ENCODE measurements at regions of chr4 and their contacts with region 1.

Region 1: GRCh38 chr4:173652283-173652931 is 122.4 kb upstream of the HAND2 start:
- DNase-seq: peak; percentile 69
- H3K4me3 ChIP-seq: no peak overlapping the region
- H3K27ac ChIP-seq: peak overlapping the region; percentile 38 to 75 (median 59)
- H3K4me1 ChIP-seq: peaks cover 0 to 21% (median 7%) of the 10 kb centered on the region in 4 donors
- H3K27me3 ChIP-seq: no peaks in the 10 kb centered on the region
- CTCF ChIP-seq: no peak
- EP300 ChIP-seq: peak; percentile 38 to 81 (median 66)
- POLR2A ChIP-seq: no peak

Region 2: DNA sequence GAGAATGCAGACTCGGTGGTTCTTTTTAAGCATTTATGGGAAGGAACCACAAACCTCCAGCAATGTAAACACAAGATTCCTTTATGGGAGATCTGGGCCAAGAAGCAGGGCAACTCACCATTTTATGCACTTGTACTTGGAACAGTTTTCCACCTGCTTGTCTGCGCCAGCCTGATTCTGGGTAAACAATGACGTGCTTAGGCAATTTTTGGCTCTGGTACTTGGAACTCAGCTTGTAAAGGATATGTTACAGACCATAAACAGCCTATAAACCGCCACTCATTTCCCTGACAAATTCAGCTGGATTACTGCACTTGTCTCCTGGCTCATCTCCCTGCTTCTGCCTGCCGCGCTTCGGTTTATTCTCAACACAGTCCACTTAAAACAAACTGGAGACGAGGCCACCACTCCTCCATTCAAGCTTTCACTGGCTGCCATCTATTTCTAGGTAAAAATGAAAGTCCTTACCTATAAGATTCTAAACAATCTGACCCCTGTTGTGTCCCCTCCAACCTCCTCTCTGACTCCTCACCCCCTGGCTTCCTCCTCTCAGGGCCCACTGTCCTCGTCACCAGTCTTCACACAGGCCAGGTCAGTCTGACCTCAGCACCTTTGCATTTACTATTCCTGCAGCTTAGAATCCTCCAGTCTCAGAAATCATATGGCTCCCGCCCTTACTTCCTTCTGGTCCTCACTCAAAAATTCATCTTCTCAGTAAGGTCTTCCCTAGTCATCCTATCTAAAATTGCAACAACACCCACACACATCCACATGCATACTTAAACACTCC is 689.6 kb before region 1 on chr4:
- intact Hi-C with region 1: loop called (anchors 10 kb)
- DNase-seq: peak; percentile 90
- H3K4me3 ChIP-seq: no peak overlapping the region
- H3K27ac ChIP-seq: peak overlapping the region; percentile 60 to 83 (median 73)
- H3K4me1 ChIP-seq: peaks cover 0 to 31% (median 25%) of the 10 kb centered on the region in 4 donors
- H3K27me3 ChIP-seq: no peaks in the 10 kb centered on the region
- CTCF ChIP-seq: no peak
- EP300 ChIP-seq: peak; percentile 87 to 98 (median 96)
- POLR2A ChIP-seq: no peak

Region 3: DNA sequence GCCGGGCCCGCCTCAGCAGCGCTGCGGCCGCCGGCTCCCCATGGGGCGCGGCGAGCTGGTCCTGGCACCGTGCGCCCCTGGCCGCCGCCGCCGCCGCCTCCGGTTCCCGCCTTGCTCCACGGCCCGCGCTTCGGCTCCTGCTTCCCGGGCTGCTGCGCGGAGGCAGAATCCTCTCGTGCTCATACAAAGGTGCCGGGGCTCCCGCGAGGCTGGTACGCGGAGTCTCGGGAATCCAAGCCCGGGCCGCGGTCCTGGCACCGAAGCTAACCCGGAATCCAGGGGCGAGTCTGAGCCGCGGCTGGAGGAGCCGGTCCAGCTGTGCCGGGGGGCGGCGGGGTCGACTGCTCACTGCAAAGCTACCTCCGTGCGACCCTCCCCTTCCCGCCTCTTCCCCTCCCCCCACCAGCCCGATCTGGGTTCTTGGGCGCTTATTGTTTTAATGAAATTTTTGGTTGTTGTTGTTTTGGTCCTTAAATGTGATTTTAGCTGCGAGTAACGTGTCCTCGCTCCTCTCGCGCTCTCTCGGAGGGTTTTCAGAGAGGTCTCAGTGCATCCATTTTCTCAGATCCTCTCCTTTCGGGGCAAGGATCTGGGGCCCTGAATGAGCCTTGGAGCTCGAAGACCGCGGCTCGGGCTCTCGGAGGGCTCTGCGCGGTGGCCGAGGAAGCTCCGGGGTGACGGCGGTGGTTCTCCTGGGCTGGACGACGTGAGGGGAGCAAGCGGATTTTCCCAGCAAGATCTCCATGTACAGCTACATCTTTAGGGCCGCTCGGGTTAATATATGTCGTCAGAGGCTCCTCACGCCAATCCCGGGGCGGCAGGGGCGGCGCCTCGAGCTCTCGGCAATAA is 122.7 kb before region 1 on chr4 and contains the start of gene HAND2:
- intact Hi-C with region 1: loop called (anchors 5 kb)
- DNase-seq: peak; percentile 97
- H3K4me3 ChIP-seq: peak within 1 kb of the TSS; percentile 90 to 98 (median 95)
- H3K27ac ChIP-seq: peak within 1 kb of the TSS; percentile 98 to 99 (median 99)
- H3K4me1 ChIP-seq: peaks cover 0 to 13% (median 5%) of the 10 kb centered on the region in 4 donors
- H3K27me3 ChIP-seq: no peaks in the 10 kb centered on the region
- CTCF ChIP-seq: no peak
- EP300 ChIP-seq: peak in 1 of 4 donors; percentile 51
- POLR2A ChIP-seq: peak; percentile 96 to 99
- total RNA-seq, gene HAND2: 141 to 224 (median 180) TPM

Region 4: DNA sequence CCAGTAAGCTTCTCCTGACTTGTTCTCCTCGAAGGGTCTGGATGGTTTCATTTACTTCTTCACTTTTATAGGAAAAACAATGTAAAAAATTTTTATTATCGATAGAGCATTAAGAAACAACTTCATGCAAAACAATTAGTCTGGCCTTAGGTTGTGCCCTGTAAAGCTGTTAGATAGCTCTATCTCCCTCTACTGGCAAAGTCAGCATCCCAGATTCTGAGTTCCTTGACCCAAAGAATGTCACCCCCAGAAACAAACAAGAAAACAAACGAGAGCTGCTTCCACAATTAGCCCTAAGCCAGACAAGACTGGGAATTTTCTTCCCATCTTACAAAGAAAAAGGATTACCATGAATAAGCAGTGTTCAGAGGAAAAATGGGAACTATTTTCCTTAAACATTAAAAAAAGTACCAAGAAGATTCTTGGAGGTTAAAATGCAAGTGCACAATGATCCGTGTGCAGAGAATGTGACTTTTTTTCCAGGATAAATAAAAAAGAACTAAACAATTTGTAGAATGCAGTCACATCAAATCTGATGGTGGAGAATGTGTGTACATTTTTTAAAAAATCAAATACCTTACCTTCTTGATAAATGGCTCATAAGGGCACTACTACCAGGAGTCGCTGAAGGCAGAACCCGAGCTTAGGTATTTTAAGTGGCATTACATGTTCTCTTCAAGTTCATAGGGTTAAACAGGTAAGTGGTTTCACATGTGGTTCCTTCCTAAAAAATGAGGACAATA is 337.9 kb after region 1 on chr4:
- intact Hi-C with region 1: loop called (anchors 5 kb)
- DNase-seq: no peak
- H3K4me3 ChIP-seq: no peak overlapping the region
- H3K27ac ChIP-seq: peak overlapping the region; percentile 43 to 73 (median 63)
- H3K4me1 ChIP-seq: peaks cover 0 to 42% (median 28%) of the 10 kb centered on the region in 4 donors
- H3K27me3 ChIP-seq: no peaks in the 10 kb centered on the region
- CTCF ChIP-seq: peak; percentile 48 to 67 (median 56)
- EP300 ChIP-seq: no peak
- POLR2A ChIP-seq: no peak

Region 5: GRCh38 chr4:174156239-174156826 is 503.9 kb after region 1 on chr4:
- intact Hi-C with region 1: loop called (anchors 5 kb)
- DNase-seq: no peak
- H3K4me3 ChIP-seq: peak overlapping the region in 2 of 4 donors; percentile 11 to 16
- H3K27ac ChIP-seq: peak overlapping the region in 3 of 4 donors; percentile 75 to 82 (median 79)
- H3K4me1 ChIP-seq: peaks cover 0 to 51% (median 26%) of the 10 kb centered on the region in 4 donors
- H3K27me3 ChIP-seq: no peaks in the 10 kb centered on the region
- CTCF ChIP-seq: peak; percentile 45 to 64 (median 62)
- EP300 ChIP-seq: no peak
- POLR2A ChIP-seq: no peak

Measured in sigmoid colon (tissue), 7 donors.